ENCODE measurements at regions of chr17 and their contacts with region 1.

Region 1: GRCh38 chr17:7862692-7863437 is 5.1 kb downstream of the CYB5D1 start:
- DNase-seq: peak in 1 of 2 experiments; percentile 78
- H3K4me3 ChIP-seq: no peak overlapping the region
- H3K27ac ChIP-seq: no peak overlapping the region
- H3K4me1 ChIP-seq: peaks cover 0 to 2% (median 0%) of the 10 kb centered on the region in 4 experiments; a peak in 2 of 7 replicates
- H3K27me3 ChIP-seq: no peaks in the 10 kb centered on the region
- CTCF ChIP-seq: peak; percentile 10 to 80 (median 66)
- EP300 ChIP-seq: no peak
- POLR2A ChIP-seq: no peak
- RAD21 ChIP-seq: peak; percentile 83 to 84

Region 2: GRCh38 chr17:7809086-7809790 is 53.6 kb before region 1 on chr17:
- CTCF ChIA-PET with region 1: no interaction called
- POLR2A ChIA-PET with region 1: no interaction called
- DNase-seq: no peak
- H3K4me3 ChIP-seq: no peak overlapping the region
- H3K27ac ChIP-seq: no peak overlapping the region
- H3K4me1 ChIP-seq: no peaks in the 10 kb centered on the region
- H3K27me3 ChIP-seq: peaks cover 0 to 2% (median 0%) of the 10 kb centered on the region in 4 experiments; a peak in 1 of 7 replicates
- CTCF ChIP-seq: no peak
- EP300 ChIP-seq: no peak
- POLR2A ChIP-seq: no peak
- RAD21 ChIP-seq: no peak

Region 3: DNA sequence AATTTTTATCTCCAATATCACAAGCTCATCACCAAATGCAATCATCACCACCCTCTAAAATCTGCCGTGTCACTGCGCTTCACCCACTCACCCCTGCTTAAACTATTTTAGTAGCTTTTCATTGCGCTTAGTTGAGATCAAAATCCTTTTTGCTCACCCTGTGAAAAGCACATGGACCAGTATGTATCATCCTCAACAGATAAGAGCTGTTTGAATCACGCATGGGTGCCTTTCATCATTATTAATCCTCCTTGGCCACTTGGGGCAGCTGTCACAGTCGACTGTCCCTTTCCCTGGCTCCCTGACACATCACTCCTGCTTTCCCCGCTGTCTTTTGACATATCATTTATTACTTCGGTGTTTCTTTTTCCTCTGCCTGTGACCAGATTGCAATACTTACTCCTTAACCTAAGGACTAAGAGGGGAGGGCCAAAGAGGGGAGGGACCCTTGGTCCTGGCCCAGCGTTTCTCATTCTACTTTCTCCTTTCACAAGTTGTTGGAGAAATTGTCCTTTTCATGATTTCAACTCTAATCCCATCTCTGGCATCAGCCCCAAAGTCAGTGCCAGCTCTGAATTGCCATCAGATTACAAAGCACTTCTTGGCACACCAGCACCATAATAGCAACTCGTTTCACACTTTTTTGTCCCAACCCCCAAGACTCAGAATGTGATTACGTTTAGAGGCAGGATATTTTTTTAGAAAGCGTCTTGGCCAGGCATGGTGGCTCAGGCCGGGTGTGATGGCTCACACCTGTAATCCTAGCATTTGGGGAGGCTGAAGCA is 37.5 kb before region 1 on chr17:
- CTCF ChIA-PET with region 1: interaction called, 12 read pairs
- POLR2A ChIA-PET with region 1: interaction called, 3 read pairs
- DNase-seq: no peak
- H3K4me3 ChIP-seq: no peak overlapping the region
- H3K27ac ChIP-seq: no peak overlapping the region
- H3K4me1 ChIP-seq: peaks cover 0 to 7% (median 5%) of the 10 kb centered on the region in 4 experiments; a peak in 5 of 7 replicates
- H3K27me3 ChIP-seq: peaks cover 0 to 18% (median 12%) of the 10 kb centered on the region in 4 experiments; a peak in 6 of 7 replicates
- CTCF ChIP-seq: peak in 1 of 3 experiments; percentile 17; a peak in 1 of 4 replicates
- EP300 ChIP-seq: no peak
- POLR2A ChIP-seq: no peak
- RAD21 ChIP-seq: no peak

Region 4: GRCh38 chr17:7844292-7845154 is 18.3 kb before region 1 on chr17:
- CTCF ChIA-PET with region 1: interaction called, 10 read pairs
- POLR2A ChIA-PET with region 1: interaction called, 20 read pairs
- DNase-seq: peak in 1 of 2 experiments; percentile 88
- H3K4me3 ChIP-seq: peak overlapping the region; percentile 70 to 98 (median 86)
- H3K27ac ChIP-seq: no peak overlapping the region
- H3K4me1 ChIP-seq: peaks cover 5 to 19% (median 12%) of the 10 kb centered on the region in 4 experiments; a peak in 6 of 7 replicates
- H3K27me3 ChIP-seq: peaks cover 16 to 40% (median 37%) of the 10 kb centered on the region in 4 experiments
- CTCF ChIP-seq: no peak
- EP300 ChIP-seq: no peak
- POLR2A ChIP-seq: peak in 1 of 2 experiments; percentile 20; a peak in 1 of 3 replicates
- RAD21 ChIP-seq: no peak

Region 5: DNA sequence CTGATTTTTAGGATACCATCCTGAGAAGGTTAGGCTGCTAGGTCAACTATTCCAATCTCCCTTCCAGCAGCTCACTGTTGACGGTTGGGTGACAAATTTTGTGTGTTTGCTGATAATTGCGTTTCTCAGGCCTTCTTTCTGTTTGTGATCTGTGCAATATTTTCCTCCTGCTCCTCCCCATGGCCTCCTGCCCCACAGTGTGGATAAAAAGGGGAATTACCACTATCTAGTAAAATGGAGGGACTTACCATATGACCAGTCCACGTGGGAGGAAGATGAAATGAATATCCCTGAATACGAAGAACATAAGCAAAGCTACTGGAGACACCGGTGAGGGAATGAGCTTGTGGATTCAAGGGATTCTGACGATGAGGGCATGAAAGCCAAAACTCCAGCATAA is 34.9 kb after region 1 on chr17:
- CTCF ChIA-PET with region 1: interaction called, 17 read pairs
- POLR2A ChIA-PET with region 1: interaction called, 3 read pairs
- DNase-seq: no peak
- H3K4me3 ChIP-seq: no peak overlapping the region
- H3K27ac ChIP-seq: no peak overlapping the region
- H3K4me1 ChIP-seq: no peaks in the 10 kb centered on the region; a peak in 1 of 7 replicates
- H3K27me3 ChIP-seq: no peaks in the 10 kb centered on the region
- CTCF ChIP-seq: peak in 1 of 3 experiments; percentile 11; a peak in 2 of 4 replicates
- EP300 ChIP-seq: no peak
- POLR2A ChIP-seq: no peak
- RAD21 ChIP-seq: peak; percentile 37 to 53

Region 6: DNA sequence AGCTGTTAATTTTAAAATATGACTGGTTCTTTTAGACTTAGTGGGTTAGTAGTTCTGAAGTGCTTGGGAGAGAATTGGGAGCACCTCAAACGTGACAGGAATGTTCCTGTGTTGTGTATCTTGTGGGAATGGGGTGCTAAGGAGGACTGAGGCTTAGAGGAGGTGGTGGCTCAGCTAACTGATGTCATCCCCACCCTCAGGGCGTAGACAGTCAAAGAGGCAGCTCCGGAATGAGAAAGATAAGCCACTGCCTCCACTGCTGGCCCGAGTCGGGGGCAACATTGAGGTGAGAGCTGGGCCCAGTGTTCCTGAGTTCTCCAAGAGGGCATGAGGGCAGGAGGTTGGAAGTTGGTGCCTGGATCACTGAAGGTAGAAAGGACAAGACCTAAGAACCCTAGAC is 42.6 kb after region 1 on chr17:
- CTCF ChIA-PET with region 1: interaction called, 26 read pairs
- POLR2A ChIA-PET with region 1: interaction called, 3 read pairs
- DNase-seq: no peak
- H3K4me3 ChIP-seq: no peak overlapping the region
- H3K27ac ChIP-seq: no peak overlapping the region
- H3K4me1 ChIP-seq: no peaks in the 10 kb centered on the region; a peak in 2 of 7 replicates
- H3K27me3 ChIP-seq: no peaks in the 10 kb centered on the region
- CTCF ChIP-seq: no peak
- EP300 ChIP-seq: no peak
- POLR2A ChIP-seq: no peak
- RAD21 ChIP-seq: no peak

Region 7: DNA sequence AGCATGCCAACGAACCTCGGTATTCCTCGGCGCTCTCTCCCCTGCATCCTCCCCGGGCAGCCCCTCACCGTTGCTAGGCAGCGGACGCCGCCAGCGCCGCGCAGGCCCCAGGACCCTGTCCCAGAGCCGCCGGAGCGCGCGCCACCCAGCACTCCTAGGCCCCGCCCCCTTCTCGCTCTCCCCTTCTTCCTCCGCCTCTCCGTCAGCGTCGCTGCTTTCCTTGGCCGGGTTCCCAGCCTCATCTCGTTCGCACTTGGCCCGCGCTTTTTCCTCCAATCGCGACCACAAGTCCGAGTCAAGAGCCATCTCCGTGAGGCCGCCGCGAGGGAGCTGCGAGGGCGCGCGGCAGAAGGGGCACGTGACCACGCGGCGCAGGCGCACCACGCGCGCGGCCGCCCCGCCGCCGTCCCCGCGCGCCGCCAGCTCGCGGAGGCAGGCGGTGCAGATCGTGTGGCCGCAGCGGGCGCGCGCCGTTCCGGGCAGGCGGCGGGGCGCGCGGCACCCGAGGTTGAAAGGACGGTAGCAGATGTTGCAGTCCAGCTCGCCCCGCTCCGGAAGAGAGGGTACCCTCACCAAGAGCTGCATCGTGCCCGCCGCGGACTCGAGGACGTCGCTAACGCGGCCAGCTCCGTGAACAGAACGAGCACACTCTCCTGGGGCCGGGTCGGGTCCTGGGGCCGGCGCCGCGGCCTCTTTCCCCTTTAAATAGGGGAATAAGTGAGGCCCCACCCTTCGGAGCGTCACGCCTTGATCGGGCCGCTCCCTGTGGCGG is 52.9 kb after region 1 on chr17 and contains the start of gene RNF227:
- CTCF ChIA-PET with region 1: interaction called, 26 read pairs
- POLR2A ChIA-PET with region 1: interaction called, 3 read pairs
- DNase-seq: peak in 1 of 2 experiments; percentile 92
- H3K4me3 ChIP-seq: peak within 1 kb of the TSS; percentile 30 to 53 (median 37)
- H3K27ac ChIP-seq: no peak within 1 kb of the TSS
- H3K4me1 ChIP-seq: peaks cover 0 to 6% (median 6%) of the 10 kb centered on the region in 4 experiments; a peak in 5 of 7 replicates
- H3K27me3 ChIP-seq: peaks cover 10 to 30% (median 26%) of the 10 kb centered on the region in 4 experiments
- CTCF ChIP-seq: no peak
- EP300 ChIP-seq: no peak
- POLR2A ChIP-seq: no peak
- RAD21 ChIP-seq: no peak
- total RNA-seq, gene RNF227: 0.63 and 0.77 TPM in 2 replicates

Region 8: GRCh38 chr17:7982666-7983065 is 119.8 kb after region 1 on chr17:
- CTCF ChIA-PET with region 1: interaction called, 25 read pairs
- POLR2A ChIA-PET with region 1: no interaction called
- DNase-seq: no peak
- H3K4me3 ChIP-seq: no peak overlapping the region
- H3K27ac ChIP-seq: no peak overlapping the region
- H3K4me1 ChIP-seq: no peaks in the 10 kb centered on the region
- H3K27me3 ChIP-seq: peaks cover 0 to 3% (median 0%) of the 10 kb centered on the region in 4 experiments; a peak in 1 of 7 replicates
- CTCF ChIP-seq: peak in 2 of 3 experiments; percentile 16 to 21; a peak in 2 of 4 replicates
- EP300 ChIP-seq: no peak
- POLR2A ChIP-seq: no peak
- RAD21 ChIP-seq: peak; percentile 28 to 51

Measured in H1 (cell line).